Transverse colon (tissue), 4 donors: ENCODE measurements at regions of chr2 and their contacts with region 1.

Region 1: DNA sequence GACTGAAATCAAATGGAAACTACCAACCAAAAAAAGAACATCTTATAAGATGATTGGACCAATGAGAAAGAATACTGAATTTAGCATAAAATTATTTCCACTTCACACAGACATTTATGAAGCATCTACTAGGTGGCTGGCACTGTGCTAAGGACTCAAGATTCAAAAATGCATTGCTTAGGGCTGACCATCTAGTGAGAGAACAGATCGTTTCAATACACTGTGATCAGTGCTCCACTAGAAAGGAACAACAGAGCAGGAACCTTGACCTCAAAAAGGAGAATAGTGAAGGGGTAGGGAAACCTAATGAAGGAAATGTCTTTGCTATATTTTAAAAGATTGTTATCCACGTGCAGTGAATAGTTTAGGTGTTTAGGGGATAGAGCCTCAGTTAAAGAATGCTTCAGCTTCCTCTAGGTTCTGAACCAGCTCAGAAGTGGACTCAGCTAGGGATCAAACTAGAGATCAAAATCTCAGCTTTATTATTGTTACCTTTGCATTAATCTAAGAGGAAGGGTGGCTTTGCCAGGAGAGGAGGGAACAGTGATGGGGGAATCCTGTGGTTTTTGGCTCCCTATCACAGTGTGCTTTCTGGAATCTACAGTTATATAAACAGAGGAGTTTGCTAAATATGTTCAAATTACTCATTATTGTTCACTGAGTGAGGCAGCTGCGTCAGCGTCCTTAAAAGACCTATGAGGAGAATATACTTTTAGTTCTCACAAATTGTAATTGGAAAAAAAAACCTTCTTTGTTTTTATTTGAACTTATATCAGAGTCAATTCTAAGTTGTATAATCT is 16.2 kb upstream of the BBS5 start:
- DNase-seq: no peak
- H3K4me3 ChIP-seq: no peak overlapping the region
- H3K27ac ChIP-seq: no peak overlapping the region
- H3K4me1 ChIP-seq: peaks cover 0 to 4% (median 0%) of the 10 kb centered on the region in 4 donors
- H3K27me3 ChIP-seq: no peaks in the 10 kb centered on the region
- CTCF ChIP-seq: no peak
- EP300 ChIP-seq: no peak
- POLR2A ChIP-seq: no peak

Region 2: GRCh38 chr2:169562519-169562918 is 99.4 kb after region 1 on chr2:
- in situ Hi-C with region 1: loop called in 1 of 4 experiments (anchors 10 kb)
- intact Hi-C with region 1: no loop called
- DNase-seq: no peak
- H3K4me3 ChIP-seq: no peak overlapping the region
- H3K27ac ChIP-seq: no peak overlapping the region
- H3K4me1 ChIP-seq: no peaks in the 10 kb centered on the region
- H3K27me3 ChIP-seq: no peaks in the 10 kb centered on the region
- CTCF ChIP-seq: no peak
- EP300 ChIP-seq: no peak
- POLR2A ChIP-seq: no peak